ENCODE measurements at regions of chr12 and their contacts with region 1.

Region 1: GRCh38 chr12:122951979-122952892 is 14.0 kb downstream of the ABCB9 start:
- DNase-seq: peak; percentile 59 to 80
- H3K4me3 ChIP-seq: no peak overlapping the region
- H3K4me1 ChIP-seq: no peaks in the 10 kb centered on the region
- H3K27me3 ChIP-seq: no peaks in the 10 kb centered on the region

Region 2: DNA sequence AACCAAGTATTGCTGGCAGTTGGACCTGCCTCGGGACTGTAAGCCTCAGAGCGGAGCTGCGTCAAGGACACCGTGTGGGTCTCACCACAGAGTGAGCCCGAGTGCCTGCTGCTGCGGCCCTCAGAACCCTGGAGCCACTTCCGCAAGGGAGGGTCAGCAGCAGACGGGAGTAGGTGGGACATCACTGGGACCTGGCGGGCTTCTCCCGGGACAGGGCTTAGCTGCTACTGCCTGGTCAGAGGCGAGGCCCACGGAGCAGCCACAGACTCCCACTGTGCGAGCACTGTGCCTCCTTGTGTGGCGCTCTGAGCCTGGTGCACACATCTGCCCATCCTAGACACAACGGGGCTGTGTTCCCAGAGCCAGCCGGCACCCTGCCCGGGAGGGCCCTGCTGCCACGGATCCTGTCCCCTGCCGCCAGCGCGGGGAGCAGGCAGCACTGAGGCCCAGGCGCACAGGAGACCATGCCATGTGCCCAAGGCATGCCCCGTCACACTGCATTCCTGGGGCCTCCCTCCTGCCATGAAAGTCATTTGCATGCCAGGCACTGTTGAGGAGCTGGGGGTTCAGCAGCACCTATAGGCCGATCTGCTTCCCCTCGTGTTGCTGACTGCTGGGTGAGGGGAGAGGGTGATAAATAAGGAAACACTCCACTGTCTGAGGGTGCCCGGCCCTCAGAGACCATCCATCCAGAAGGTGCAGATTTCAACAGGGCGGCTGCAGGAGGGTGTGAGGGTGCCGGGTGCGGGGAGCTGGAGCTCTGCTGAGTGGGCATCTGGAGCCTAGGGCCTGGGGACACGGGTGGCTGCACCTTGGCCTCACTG is 107.0 kb before region 1 on chr12:
- in situ Hi-C with region 1: no loop called
- DNase-seq: no peak
- H3K4me3 ChIP-seq: no peak overlapping the region
- H3K4me1 ChIP-seq: no peaks in the 10 kb centered on the region
- H3K27me3 ChIP-seq: no peaks in the 10 kb centered on the region

Region 3: GRCh38 chr12:122856999-122857671 is 95.1 kb before region 1 on chr12:
- in situ Hi-C with region 1: loop called (anchors 5 kb)
- DNase-seq: no peak
- H3K4me3 ChIP-seq: no peak overlapping the region
- H3K4me1 ChIP-seq: no peaks in the 10 kb centered on the region
- H3K27me3 ChIP-seq: no peaks in the 10 kb centered on the region

Measured in HAP-1 (cell line).